ENCODE measurements at regions of chr7 and their contacts with region 1.

Region 1: DNA sequence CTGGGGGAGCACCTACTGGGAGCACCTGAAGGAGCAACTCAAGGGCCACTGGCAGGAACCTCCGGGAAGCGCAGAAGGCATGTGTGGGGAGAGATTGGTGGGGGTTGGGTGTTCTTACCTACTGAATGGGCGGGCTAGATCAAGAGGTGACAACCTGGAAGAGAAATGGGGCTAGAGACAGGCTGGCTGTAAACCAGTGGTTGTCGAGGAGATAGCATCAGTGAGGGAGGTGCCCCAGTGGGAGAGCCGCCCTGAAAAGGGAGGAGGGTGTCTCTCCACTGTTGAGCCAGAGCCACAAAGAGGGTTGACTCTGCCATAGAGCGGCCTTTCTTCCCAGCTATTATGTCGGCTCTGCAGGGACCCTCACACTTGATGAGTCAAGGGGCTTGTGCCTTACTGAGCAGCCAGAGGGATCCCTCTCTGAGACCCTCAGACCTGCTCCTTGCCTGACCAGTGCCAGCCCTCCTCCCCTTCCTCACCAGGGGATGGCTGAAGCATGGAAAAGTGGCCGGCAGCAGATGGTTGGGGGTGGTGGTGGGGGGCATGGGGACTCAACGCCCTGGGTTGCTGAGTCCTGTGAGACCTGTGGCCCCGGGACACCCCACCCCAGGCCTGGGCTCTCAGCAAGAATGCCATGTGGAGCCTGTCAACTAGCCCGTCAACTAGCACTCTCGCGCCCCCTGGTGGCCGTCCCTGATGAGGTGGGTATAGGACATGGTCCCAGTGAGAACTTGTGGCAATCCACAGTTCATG is 36.5 kb upstream of the PURB start:
- DNase-seq: peak; percentile 98
- H3K4me3 Mint-ChIP-seq: no peak overlapping the region
- H3K27ac Mint-ChIP-seq: peak overlapping the region; percentile 81
- H3K4me1 Mint-ChIP-seq: peaks cover 12% of the 10 kb centered on the region
- H3K27me3 Mint-ChIP-seq: peaks cover under 1% of the 10 kb centered on the region

Region 2: DNA sequence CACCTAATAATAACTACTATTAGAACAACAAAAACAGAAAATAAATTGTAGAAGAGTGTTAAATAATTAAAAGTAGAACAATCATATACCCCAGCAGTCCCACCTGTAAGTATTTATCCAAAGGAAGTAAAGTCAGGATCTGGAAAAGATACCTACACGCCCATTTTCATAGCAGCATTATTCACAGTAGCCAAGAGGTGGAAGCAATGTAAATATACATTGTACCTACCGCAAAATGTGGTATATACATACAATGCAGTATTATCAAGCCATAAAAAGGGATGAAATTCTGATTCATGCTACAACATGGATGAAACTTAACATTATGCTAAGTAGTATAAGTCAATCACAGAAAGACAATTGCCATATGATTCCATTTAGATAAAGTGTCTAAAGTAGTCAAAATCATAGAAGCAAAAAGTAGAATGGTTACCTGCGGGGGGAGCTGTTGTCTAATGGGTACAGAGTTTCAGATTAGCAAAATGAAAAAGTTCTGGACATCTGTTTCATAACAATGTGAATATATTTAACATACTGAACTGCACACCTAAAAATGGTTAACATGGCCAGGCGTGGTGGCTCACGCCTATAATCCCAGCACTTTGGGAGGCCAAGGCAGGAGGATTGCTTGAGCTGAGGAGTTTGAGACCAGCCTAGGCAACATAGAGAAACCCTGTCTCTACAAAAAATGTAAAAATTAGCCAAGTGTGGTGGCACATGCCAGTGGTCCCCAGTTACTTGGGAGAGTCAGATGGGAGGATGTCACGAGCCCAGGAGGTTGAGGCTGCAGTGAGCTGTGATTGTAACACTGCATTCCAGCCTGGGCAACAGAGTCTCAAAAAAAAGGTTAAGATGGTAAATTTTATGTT is 333.7 kb before region 1 on chr7:
- intact Hi-C with region 1: loop called (anchors 1 kb)
- DNase-seq: peak; percentile 90
- H3K4me3 Mint-ChIP-seq: no peak overlapping the region
- H3K27ac Mint-ChIP-seq: no peak overlapping the region
- H3K4me1 Mint-ChIP-seq: peaks cover 15% of the 10 kb centered on the region
- H3K27me3 Mint-ChIP-seq: peaks cover 3% of the 10 kb centered on the region

Region 3: DNA sequence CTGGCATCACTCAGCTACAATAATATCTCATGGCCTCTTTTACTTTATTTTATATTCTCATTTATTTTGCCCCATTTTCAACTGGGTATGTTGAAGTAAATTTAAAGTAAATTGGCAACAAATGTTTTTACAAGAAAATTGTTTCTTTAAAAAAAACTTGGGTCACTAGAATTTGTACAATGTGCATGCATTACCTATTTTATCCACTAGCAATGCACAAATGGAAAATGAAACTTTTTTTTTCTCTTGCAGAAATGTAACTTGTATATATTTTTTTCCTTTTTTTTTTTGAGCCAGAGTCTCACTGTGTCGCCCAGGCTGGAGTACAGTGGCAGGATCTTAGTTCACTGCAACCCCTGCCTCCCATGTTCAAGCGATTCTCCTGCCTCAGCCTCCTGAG is 63.6 kb before region 1 on chr7:
- intact Hi-C with region 1: loop called (anchors 1 kb)
- DNase-seq: no peak
- H3K4me3 Mint-ChIP-seq: no peak overlapping the region
- H3K27ac Mint-ChIP-seq: no peak overlapping the region
- H3K4me1 Mint-ChIP-seq: peaks cover 15% of the 10 kb centered on the region
- H3K27me3 Mint-ChIP-seq: peaks cover 3% of the 10 kb centered on the region